ENCODE measurements at regions of chr11 and their contacts with region 1.

Region 1: GRCh38 chr11:73350908-73351636 is 25.1 kb upstream of the RELT start:
- DNase-seq: peak; percentile 72 to 77 (median 75)
- H3K4me3 ChIP-seq: no peak overlapping the region
- H3K4me3 Mint-ChIP-seq: no peak overlapping the region
- H3K27ac ChIP-seq: no peak overlapping the region
- H3K27ac Mint-ChIP-seq: peak overlapping the region; percentile 44 to 87 (median 73)
- H3K4me1 ChIP-seq: no peaks in the 10 kb centered on the region
- H3K4me1 Mint-ChIP-seq: peaks cover 0 to 6% (median 2%) of the 10 kb centered on the region in 4 donors
- H3K27me3 ChIP-seq: no peaks in the 10 kb centered on the region
- H3K27me3 Mint-ChIP-seq: peaks cover 0 to 5% of the 10 kb centered on the region in 2 donors

Region 2: DNA sequence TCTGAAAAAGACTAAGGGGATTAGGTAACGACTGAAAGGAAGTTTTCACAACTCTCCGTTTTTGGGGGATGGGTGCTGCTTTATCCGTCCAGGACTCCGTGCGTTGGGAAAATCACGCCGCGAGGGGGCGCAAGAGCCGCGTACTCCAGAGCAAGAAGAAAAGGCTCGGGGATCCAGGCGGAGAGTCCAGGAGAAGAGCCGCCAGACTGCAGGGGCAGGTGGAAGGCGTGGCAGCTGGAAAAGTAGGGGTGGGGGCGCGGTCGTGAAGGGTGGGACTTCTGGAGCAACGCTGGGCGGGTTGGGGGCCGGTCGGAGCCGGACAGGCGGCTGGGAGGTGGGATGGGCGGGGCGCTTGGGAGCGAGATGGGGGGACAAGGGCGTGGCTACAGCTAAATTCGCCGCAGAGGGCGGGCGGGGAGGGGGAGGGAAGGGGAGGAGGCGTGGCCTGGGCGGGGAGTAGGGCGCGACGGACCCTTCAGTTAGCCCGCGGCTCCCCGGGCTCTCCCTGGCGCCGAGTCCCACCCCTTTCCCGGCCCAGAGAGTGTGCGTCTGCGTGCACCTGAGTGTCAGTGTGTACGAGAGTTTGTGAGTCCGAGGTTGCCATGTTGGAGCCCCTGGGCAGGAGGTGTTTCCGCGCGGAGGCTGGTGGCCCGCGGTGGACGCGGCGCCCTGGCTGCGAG is 43.6 kb before region 1 on chr11:
- CTCF ChIA-PET with region 1: interaction called, 26 read pairs
- POLR2A ChIA-PET with region 1: no interaction called
- intact Hi-C with region 1: no loop called
- DNase-seq: peak; percentile 82 to 87 (median 85)
- H3K4me3 ChIP-seq: peak overlapping the region; percentile 23 to 58
- H3K4me3 Mint-ChIP-seq: peak overlapping the region; percentile 84 to 96 (median 94)
- H3K27ac ChIP-seq: no peak overlapping the region
- H3K27ac Mint-ChIP-seq: peak overlapping the region in 6 of 7 donors; percentile 10 to 88 (median 54)
- H3K4me1 ChIP-seq: peaks cover 8% of the 10 kb centered on the region
- H3K4me1 Mint-ChIP-seq: peaks cover 6 to 18% (median 11%) of the 10 kb centered on the region in 4 donors
- H3K27me3 ChIP-seq: no peaks in the 10 kb centered on the region
- H3K27me3 Mint-ChIP-seq: peaks cover 7 to 19% of the 10 kb centered on the region in 2 donors

Region 3: GRCh38 chr11:73376160-73376802 is 25.2 kb after region 1 on chr11 and contains the start of gene RELT:
- CTCF ChIA-PET with region 1: interaction called, 43 read pairs
- POLR2A ChIA-PET with region 1: interaction called, 3 read pairs
- intact Hi-C with region 1: loop called (anchors 1 kb)
- DNase-seq: peak; percentile 87 to 97 (median 94)
- H3K4me3 ChIP-seq: peak within 1 kb of the TSS; percentile 49 to 86
- H3K4me3 Mint-ChIP-seq: peak within 1 kb of the TSS; percentile 87 to 98 (median 96)
- H3K27ac ChIP-seq: peak within 1 kb of the TSS; percentile 89
- H3K27ac Mint-ChIP-seq: peak within 1 kb of the TSS; percentile 89 to 100 (median 99)
- H3K4me1 ChIP-seq: peaks cover 51% of the 10 kb centered on the region
- H3K4me1 Mint-ChIP-seq: peaks cover 20 to 53% (median 37%) of the 10 kb centered on the region in 4 donors
- H3K27me3 ChIP-seq: no peaks in the 10 kb centered on the region
- H3K27me3 Mint-ChIP-seq: no peaks in the 10 kb centered on the region
- total RNA-seq, gene RELT: 12.1 to 12.9 TPM

Region 4: DNA sequence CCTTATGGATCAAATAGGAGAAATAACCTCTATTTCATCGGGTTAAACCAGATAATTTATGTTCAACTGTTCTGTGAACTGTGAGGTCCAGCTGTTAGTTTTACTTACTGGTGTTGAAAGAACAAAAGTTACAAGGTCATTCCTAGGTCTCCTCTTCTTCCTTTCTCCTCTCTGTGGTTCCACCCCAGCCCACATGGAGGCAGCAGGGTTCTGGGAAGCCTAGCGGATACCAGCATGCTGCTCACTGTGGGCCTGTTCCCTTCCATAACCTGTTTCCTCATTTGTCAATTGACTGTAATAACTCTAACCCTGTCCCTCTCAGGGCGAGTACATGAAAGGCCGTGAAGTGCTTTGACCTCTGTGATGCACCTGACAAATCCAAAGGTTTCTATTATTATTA is 53.0 kb after region 1 on chr11:
- CTCF ChIA-PET with region 1: interaction called, 42 read pairs
- POLR2A ChIA-PET with region 1: no interaction called
- intact Hi-C with region 1: no loop called
- DNase-seq: no peak
- H3K4me3 ChIP-seq: no peak overlapping the region
- H3K4me3 Mint-ChIP-seq: no peak overlapping the region
- H3K27ac ChIP-seq: no peak overlapping the region
- H3K27ac Mint-ChIP-seq: peak overlapping the region in 3 of 7 donors; percentile 52 to 81 (median 74)
- H3K4me1 ChIP-seq: no peaks in the 10 kb centered on the region
- H3K4me1 Mint-ChIP-seq: peaks cover 0 to 6% (median under 1%) of the 10 kb centered on the region in 4 donors
- H3K27me3 ChIP-seq: no peaks in the 10 kb centered on the region
- H3K27me3 Mint-ChIP-seq: no peaks in the 10 kb centered on the region

Region 5: DNA sequence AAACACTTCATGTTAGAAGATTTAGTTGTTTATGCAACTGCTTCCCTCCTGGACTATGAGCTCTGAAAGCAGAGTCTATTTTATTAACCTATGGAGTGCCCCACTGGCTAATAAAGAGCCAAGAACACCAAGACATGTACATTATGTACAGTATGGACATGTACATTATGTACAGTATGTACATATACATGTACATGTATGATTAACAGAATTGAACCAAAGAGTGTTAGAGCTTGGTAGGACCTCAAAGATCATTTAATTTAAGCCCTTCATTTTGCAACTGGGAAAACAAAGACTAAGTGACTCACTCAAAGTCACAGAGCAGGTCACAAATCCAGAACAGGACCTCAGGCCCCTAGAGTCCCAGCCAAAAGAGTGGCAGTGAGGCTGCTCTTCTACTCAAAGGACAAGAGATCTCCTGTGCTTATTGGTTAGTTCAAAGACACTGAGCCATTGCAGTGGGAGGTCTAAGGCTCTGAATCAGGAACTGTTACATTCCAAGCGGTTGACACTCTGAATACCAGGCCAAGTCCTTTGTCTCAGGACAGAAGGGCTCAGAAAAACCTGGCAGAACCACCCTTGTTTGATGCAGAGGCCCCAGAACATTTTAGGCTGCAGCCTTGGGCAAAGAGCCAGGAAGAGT is 143.0 kb after region 1 on chr11:
- CTCF ChIA-PET with region 1: no interaction called
- POLR2A ChIA-PET with region 1: no interaction called
- intact Hi-C with region 1: no loop called
- DNase-seq: no peak
- H3K4me3 ChIP-seq: no peak overlapping the region
- H3K4me3 Mint-ChIP-seq: no peak overlapping the region
- H3K27ac ChIP-seq: no peak overlapping the region
- H3K27ac Mint-ChIP-seq: no peak overlapping the region
- H3K4me1 ChIP-seq: no peaks in the 10 kb centered on the region
- H3K4me1 Mint-ChIP-seq: peaks cover under 1 to 10% (median 4%) of the 10 kb centered on the region in 4 donors
- H3K27me3 ChIP-seq: no peaks in the 10 kb centered on the region
- H3K27me3 Mint-ChIP-seq: no peaks in the 10 kb centered on the region

Region 6: GRCh38 chr11:73625696-73626318 is 274.7 kb after region 1 on chr11:
- CTCF ChIA-PET with region 1: interaction called, 16 read pairs
- POLR2A ChIA-PET with region 1: interaction called, 4 read pairs
- intact Hi-C with region 1: no loop called
- DNase-seq: peak; percentile 60 to 70 (median 66)
- H3K4me3 ChIP-seq: no peak overlapping the region
- H3K4me3 Mint-ChIP-seq: peak overlapping the region in 1 of 8 donors; percentile 24
- H3K27ac ChIP-seq: no peak overlapping the region
- H3K27ac Mint-ChIP-seq: no peak overlapping the region
- H3K4me1 ChIP-seq: no peaks in the 10 kb centered on the region
- H3K4me1 Mint-ChIP-seq: peaks cover 0 to 4% (median 0%) of the 10 kb centered on the region in 4 donors
- H3K27me3 ChIP-seq: no peaks in the 10 kb centered on the region
- H3K27me3 Mint-ChIP-seq: peaks cover 6 to 13% of the 10 kb centered on the region in 2 donors